ENCODE measurements at regions of chr6 and their contacts with region 1.

Region 1: GRCh38 chr6:137944793-137945498 is 77.9 kb downstream of the TNFAIP3 start:
- DNase-seq: no peak
- ATAC-seq: peak; percentile 85 to 88

Region 2: GRCh38 chr6:137866914-137867684 is 77.8 kb before region 1 on chr6 and contains the start of gene TNFAIP3:
- intact Hi-C with region 1: loop called (anchors 5 to 10 kb)
- DNase-seq: peak; percentile 95
- ATAC-seq: peak; percentile 93 to 95
- total RNA-seq, gene TNFAIP3: 10.9 to 13.6 TPM

Region 3: DNA sequence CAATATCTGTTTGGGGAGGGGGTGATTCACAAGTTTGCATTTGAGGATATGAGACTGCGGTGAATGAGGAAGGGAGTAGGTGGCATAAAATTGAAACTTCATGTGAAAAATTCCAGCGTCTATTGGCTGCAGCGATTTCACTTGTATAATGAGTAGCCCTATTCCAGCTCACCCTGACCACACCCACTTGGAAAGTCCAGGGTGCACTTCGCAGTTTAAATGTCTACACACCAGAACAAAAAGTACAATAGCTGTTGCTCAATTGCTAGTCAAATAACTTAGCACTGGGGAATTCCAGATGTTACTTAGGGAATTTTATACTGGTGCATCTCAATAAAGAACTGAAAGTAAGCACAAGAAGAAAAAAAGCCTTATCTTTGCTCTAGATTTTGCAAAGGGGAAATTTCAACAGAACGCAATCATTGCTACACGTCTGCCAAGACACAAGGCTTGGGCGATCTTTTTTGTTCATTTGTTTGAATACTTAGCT is 71.6 kb before region 1 on chr6:
- intact Hi-C with region 1: loop called (anchors 5 to 10 kb)
- DNase-seq: peak; percentile 75
- ATAC-seq: peak; percentile 83 to 92

Region 4: GRCh38 chr6:137892271-137892708 is 52.7 kb before region 1 on chr6:
- intact Hi-C with region 1: no loop called
- DNase-seq: no peak
- ATAC-seq: peak in 1 of 2 donors; percentile 82

Measured in left cardiac atrium (tissue), 4 donors.